ENCODE measurements at regions of chr2 and their contacts with region 1.

Region 1: GRCh38 chr2:179422037-179422643 is 157.5 kb upstream of the SESTD1 start:
- DNase-seq: peak; percentile 62 to 82 (median 73)
- H3K4me3 ChIP-seq: no peak overlapping the region
- H3K27ac ChIP-seq: no peak overlapping the region
- H3K4me1 ChIP-seq: no peaks in the 10 kb centered on the region
- H3K27me3 ChIP-seq: no peaks in the 10 kb centered on the region
- CTCF ChIP-seq: peak in 2 of 3 donors; percentile 25 to 55
- EP300 ChIP-seq: no peak
- POLR2A ChIP-seq: no peak

Region 2: GRCh38 chr2:179612108-179612507 is 190.0 kb after region 1 on chr2:
- intact Hi-C with region 1: loop called in 1 of 4 experiments (anchors 10 kb)
- DNase-seq: no peak
- H3K4me3 ChIP-seq: no peak overlapping the region
- H3K27ac ChIP-seq: no peak overlapping the region
- H3K4me1 ChIP-seq: peaks cover 7% of the 10 kb centered on the region
- H3K27me3 ChIP-seq: no peaks in the 10 kb centered on the region
- CTCF ChIP-seq: no peak
- EP300 ChIP-seq: no peak
- POLR2A ChIP-seq: no peak

Region 3: DNA sequence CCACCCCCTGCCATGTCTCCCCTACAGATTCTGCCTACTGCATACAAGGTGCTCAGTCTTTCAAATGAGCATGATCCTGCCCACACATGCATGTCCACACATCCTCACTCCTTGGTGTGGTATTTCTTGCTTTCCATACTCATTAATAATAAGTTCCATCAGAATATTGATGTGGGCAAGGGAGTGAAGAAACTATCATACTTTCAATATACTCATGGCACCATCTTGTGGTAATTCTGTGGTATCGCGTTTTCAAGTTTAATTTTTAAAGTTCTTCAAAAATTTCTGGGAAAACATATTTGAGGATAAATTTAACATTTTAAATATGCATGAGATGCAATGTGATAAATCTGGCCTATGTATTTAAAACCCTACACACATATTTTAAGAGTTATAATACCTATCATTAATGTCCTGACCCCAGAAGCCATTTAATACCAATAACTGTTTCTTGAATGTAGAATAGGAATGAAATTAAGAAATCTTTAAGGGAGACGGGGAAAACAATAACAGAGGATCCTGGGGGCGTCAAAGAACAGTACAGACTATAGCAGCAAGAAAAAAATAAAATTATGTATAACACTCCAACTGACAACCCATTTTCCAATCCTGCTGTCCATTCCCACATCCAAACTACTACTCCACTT is 329.1 kb after region 1 on chr2:
- intact Hi-C with region 1: loop called in 3 of 4 experiments (anchors 5 to 10 kb)
- DNase-seq: no peak
- H3K4me3 ChIP-seq: no peak overlapping the region
- H3K27ac ChIP-seq: no peak overlapping the region
- H3K4me1 ChIP-seq: no peaks in the 10 kb centered on the region
- H3K27me3 ChIP-seq: no peaks in the 10 kb centered on the region
- CTCF ChIP-seq: peak in 2 of 3 donors; percentile 54 to 58
- EP300 ChIP-seq: no peak
- POLR2A ChIP-seq: no peak